Pancreas (tissue), 10 donors: ENCODE measurements at regions of chr2 and their contacts with region 1.

Region 1: GRCh38 chr2:68715353-68716041 is 19.1 kb upstream of the ARHGAP25 start:
- DNase-seq: peak; percentile 46 to 75 (median 66)
- ATAC-seq: peak; percentile 80 to 96 (median 94)
- H3K4me3 ChIP-seq: no peak overlapping the region
- H3K27ac ChIP-seq: no peak overlapping the region
- H3K4me1 ChIP-seq: no peaks in the 10 kb centered on the region
- H3K27me3 ChIP-seq: no peaks in the 10 kb centered on the region
- CTCF ChIP-seq: peak; percentile 53 to 69 (median 60)

Region 2: GRCh38 chr2:68467077-68467960 is 248.2 kb before region 1 on chr2 and contains the starts of genes APLF and FBXO48:
- intact Hi-C with region 1: loop called in 1 of 3 experiments (anchors 10 kb)
- DNase-seq: peak; percentile 93 to 99 (median 98)
- ATAC-seq: peak; percentile 95 to 97 (median 96)
- H3K4me3 ChIP-seq: peak within 1 kb of the TSS; percentile 72 to 76 (median 75)
- H3K27ac ChIP-seq: peak within 1 kb of the TSS; percentile 51 to 86 (median 74)
- H3K4me1 ChIP-seq: peaks cover 0 to 19% (median 7%) of the 10 kb centered on the region in 3 donors
- H3K27me3 ChIP-seq: no peaks in the 10 kb centered on the region
- CTCF ChIP-seq: no peak
- total RNA-seq, gene APLF: 1.4 to 4.2 (median 2.1) TPM
- total RNA-seq, gene FBXO48: 0.46 to 1.1 (median 0.82) TPM

Region 3: GRCh38 chr2:68774569-68775271 is 59.2 kb after region 1 on chr2:
- intact Hi-C with region 1: no loop called
- DNase-seq: peak in 3 of 6 donors; percentile 51 to 63 (median 53)
- ATAC-seq: peak in 3 of 4 donors; percentile 46 to 74 (median 73)
- H3K4me3 ChIP-seq: peak overlapping the region in 1 of 4 donors; percentile 26
- H3K27ac ChIP-seq: peak overlapping the region in 2 of 4 donors; percentile 49 to 56
- H3K4me1 ChIP-seq: peaks cover 4 to 6% (median 5%) of the 10 kb centered on the region in 3 donors
- H3K27me3 ChIP-seq: no peaks in the 10 kb centered on the region
- CTCF ChIP-seq: no peak